ENCODE measurements at regions of chr2 and their contacts with region 1.

Region 1: GRCh38 chr2:210195101-210195852 is 24.1 kb upstream of the KANSL1L start:
- DNase-seq: no peak
- H3K4me3 ChIP-seq: peak overlapping the region in 1 of 2 donors; percentile 28
- H3K27ac ChIP-seq: no peak overlapping the region
- H3K4me1 ChIP-seq: no peaks in the 10 kb centered on the region
- H3K27me3 ChIP-seq: no peaks in the 10 kb centered on the region
- CTCF ChIP-seq: peak; percentile 39 to 61 (median 49)

Region 2: GRCh38 chr2:209977386-209978239 is 217.7 kb before region 1 on chr2:
- intact Hi-C with region 1: loop called (anchors 1 kb)
- DNase-seq: no peak
- H3K4me3 ChIP-seq: no peak overlapping the region
- H3K27ac ChIP-seq: no peak overlapping the region
- H3K4me1 ChIP-seq: no peaks in the 10 kb centered on the region
- H3K27me3 ChIP-seq: no peaks in the 10 kb centered on the region
- CTCF ChIP-seq: peak; percentile 46 to 63 (median 48)

Region 3: DNA sequence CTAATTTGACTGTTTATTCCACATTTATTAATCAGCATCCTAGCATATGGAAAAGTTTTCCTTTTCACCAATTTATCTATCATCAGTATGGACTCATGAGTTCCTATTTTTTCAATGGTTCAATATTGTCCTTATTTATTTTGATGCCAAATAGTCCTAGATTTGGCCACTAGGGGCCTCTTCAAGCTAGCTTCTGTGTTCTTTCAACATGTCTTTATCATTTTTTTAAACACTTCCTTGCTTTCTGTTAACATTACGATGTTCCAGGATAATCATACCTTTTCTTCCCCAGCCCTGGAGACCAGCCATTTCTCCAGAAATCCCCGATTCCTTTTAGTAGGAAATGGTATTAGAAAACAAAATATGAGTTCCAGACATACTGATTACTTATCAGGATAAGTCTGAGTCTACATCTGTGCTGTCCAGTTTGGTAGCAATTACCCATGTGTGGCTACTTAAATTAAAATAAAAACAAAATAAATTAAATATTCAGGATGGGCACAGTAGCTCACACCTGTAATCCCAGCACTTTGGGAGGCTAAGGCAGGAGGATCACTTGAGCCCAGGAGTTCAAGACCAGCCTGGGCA is 122.3 kb before region 1 on chr2:
- intact Hi-C with region 1: loop called (anchors 2 kb)
- DNase-seq: no peak
- H3K4me3 ChIP-seq: no peak overlapping the region
- H3K27ac ChIP-seq: no peak overlapping the region
- H3K4me1 ChIP-seq: no peaks in the 10 kb centered on the region
- H3K27me3 ChIP-seq: no peaks in the 10 kb centered on the region
- CTCF ChIP-seq: peak in 2 of 3 experiments; percentile 38 to 50

Region 4: GRCh38 chr2:210147614-210148013 is 47.7 kb before region 1 on chr2:
- intact Hi-C with region 1: no loop called
- DNase-seq: no peak
- H3K4me3 ChIP-seq: no peak overlapping the region
- H3K27ac ChIP-seq: no peak overlapping the region
- H3K4me1 ChIP-seq: no peaks in the 10 kb centered on the region
- H3K27me3 ChIP-seq: no peaks in the 10 kb centered on the region
- CTCF ChIP-seq: no peak

Region 5: GRCh38 chr2:210387074-210387473 is 191.8 kb after region 1 on chr2:
- intact Hi-C with region 1: no loop called
- DNase-seq: no peak
- H3K4me3 ChIP-seq: no peak overlapping the region
- H3K27ac ChIP-seq: no peak overlapping the region
- H3K4me1 ChIP-seq: no peaks in the 10 kb centered on the region
- H3K27me3 ChIP-seq: no peaks in the 10 kb centered on the region
- CTCF ChIP-seq: no peak

Measured in ascending aorta (tissue), 2 donors.